HepG2 (cell line): ENCODE measurements at regions of chr16 and their contacts with region 1.

Region 1: GRCh38 chr16:18801197-18801972 is at the start of gene ARL6IP1:
- DNase-seq: peak; percentile 100
- ATAC-seq: peak; percentile 95
- H3K4me3 ChIP-seq: peak within 1 kb of the TSS; percentile 88 to 100 (median 95)
- H3K27ac ChIP-seq: peak within 1 kb of the TSS; percentile 86
- H3K4me1 ChIP-seq: peaks cover 65% of the 10 kb centered on the region
- H3K27me3 ChIP-seq: no peaks in the 10 kb centered on the region; a peak in 1 of 5 replicates
- CTCF ChIP-seq: peak; percentile 100
- EP300 ChIP-seq: peak; percentile 53 to 77; a peak in 3 of 4 replicates
- POLR2A ChIP-seq: peak; percentile 100
- RAD21 ChIP-seq: peak; percentile 91
- total RNA-seq, gene ARL6IP1: 273 and 373 TPM in 2 replicates

Region 2: DNA sequence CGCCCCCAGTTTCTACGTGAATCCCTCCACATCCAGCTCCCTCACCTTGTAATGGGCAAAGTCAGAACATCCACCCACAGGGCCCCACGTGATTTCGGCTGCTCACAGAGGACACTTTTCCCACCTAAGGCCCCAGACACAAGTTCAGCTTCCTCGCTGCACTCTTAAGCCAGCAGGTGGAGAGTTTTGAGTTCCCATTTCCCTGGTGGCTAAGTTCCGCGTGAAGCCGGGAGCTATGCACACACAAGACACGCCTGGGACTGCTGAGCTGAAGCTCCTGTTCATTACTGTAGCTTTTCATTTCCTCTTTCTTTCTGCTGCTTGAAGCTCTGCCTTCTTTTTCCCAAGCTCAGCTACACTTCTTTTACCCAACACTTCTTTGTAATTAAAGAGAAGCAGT is 738.7 kb before region 1 on chr16:
- CTCF ChIA-PET with region 1: no interaction called
- POLR2A ChIA-PET with region 1: no interaction called
- in situ Hi-C with region 1: no loop called
- intact Hi-C with region 1: no loop called
- DNase-seq: no peak
- ATAC-seq: peak; percentile 42; the same call in 1 of the 3 replicates
- H3K4me3 ChIP-seq: no peak overlapping the region
- H3K27ac ChIP-seq: no peak overlapping the region
- H3K4me1 ChIP-seq: no peaks in the 10 kb centered on the region
- H3K27me3 ChIP-seq: peaks cover 5 to 41% of the 10 kb centered on the region in 2 experiments; a peak in 4 of 5 replicates
- CTCF ChIP-seq: no peak
- EP300 ChIP-seq: no peak
- POLR2A ChIP-seq: no peak
- RAD21 ChIP-seq: no peak

Region 3: GRCh38 chr16:18782697-18783429 is 18.5 kb before region 1 on chr16:
- CTCF ChIA-PET with region 1: no interaction called
- POLR2A ChIA-PET with region 1: interaction called, 545 read pairs
- in situ Hi-C with region 1: no loop called
- intact Hi-C with region 1: no loop called
- DNase-seq: no peak
- ATAC-seq: no peak
- H3K4me3 ChIP-seq: no peak overlapping the region
- H3K27ac ChIP-seq: no peak overlapping the region
- H3K4me1 ChIP-seq: peaks cover 42% of the 10 kb centered on the region
- H3K27me3 ChIP-seq: no peaks in the 10 kb centered on the region
- CTCF ChIP-seq: no peak
- EP300 ChIP-seq: no peak
- POLR2A ChIP-seq: peak in 1 of 2 experiments; percentile 23; a peak in 1 of 4 replicates
- RAD21 ChIP-seq: no peak

Region 4: GRCh38 chr16:18816286-18816685 is 14.9 kb after region 1 on chr16:
- CTCF ChIA-PET with region 1: no interaction called
- POLR2A ChIA-PET with region 1: interaction called, 51 read pairs
- in situ Hi-C with region 1: no loop called
- intact Hi-C with region 1: no loop called
- DNase-seq: no peak
- ATAC-seq: no peak
- H3K4me3 ChIP-seq: no peak overlapping the region
- H3K27ac ChIP-seq: no peak overlapping the region
- H3K4me1 ChIP-seq: no peaks in the 10 kb centered on the region
- H3K27me3 ChIP-seq: no peaks in the 10 kb centered on the region
- CTCF ChIP-seq: no peak
- EP300 ChIP-seq: no peak
- POLR2A ChIP-seq: no peak
- RAD21 ChIP-seq: no peak

Region 5: GRCh38 chr16:18846416-18846815 is 45.0 kb after region 1 on chr16:
- CTCF ChIA-PET with region 1: no interaction called
- POLR2A ChIA-PET with region 1: interaction called, 10 read pairs
- in situ Hi-C with region 1: no loop called
- intact Hi-C with region 1: no loop called
- DNase-seq: no peak
- ATAC-seq: no peak
- H3K4me3 ChIP-seq: no peak overlapping the region
- H3K27ac ChIP-seq: no peak overlapping the region
- H3K4me1 ChIP-seq: no peaks in the 10 kb centered on the region
- H3K27me3 ChIP-seq: no peaks in the 10 kb centered on the region
- CTCF ChIP-seq: no peak
- EP300 ChIP-seq: no peak
- POLR2A ChIP-seq: no peak
- RAD21 ChIP-seq: no peak

Region 6: GRCh38 chr16:18959031-18959505 is 157.7 kb after region 1 on chr16:
- CTCF ChIA-PET with region 1: no interaction called
- POLR2A ChIA-PET with region 1: interaction called, 27 read pairs
- in situ Hi-C with region 1: no loop called
- intact Hi-C with region 1: no loop called
- DNase-seq: peak; percentile 35
- ATAC-seq: peak; percentile 17
- H3K4me3 ChIP-seq: no peak overlapping the region
- H3K27ac ChIP-seq: no peak overlapping the region
- H3K4me1 ChIP-seq: peaks cover 53% of the 10 kb centered on the region
- H3K27me3 ChIP-seq: peaks cover 3 to 8% of the 10 kb centered on the region in 2 experiments; a peak in 2 of 5 replicates
- CTCF ChIP-seq: no peak
- EP300 ChIP-seq: no peak
- POLR2A ChIP-seq: no peak
- RAD21 ChIP-seq: no peak

Region 7: DNA sequence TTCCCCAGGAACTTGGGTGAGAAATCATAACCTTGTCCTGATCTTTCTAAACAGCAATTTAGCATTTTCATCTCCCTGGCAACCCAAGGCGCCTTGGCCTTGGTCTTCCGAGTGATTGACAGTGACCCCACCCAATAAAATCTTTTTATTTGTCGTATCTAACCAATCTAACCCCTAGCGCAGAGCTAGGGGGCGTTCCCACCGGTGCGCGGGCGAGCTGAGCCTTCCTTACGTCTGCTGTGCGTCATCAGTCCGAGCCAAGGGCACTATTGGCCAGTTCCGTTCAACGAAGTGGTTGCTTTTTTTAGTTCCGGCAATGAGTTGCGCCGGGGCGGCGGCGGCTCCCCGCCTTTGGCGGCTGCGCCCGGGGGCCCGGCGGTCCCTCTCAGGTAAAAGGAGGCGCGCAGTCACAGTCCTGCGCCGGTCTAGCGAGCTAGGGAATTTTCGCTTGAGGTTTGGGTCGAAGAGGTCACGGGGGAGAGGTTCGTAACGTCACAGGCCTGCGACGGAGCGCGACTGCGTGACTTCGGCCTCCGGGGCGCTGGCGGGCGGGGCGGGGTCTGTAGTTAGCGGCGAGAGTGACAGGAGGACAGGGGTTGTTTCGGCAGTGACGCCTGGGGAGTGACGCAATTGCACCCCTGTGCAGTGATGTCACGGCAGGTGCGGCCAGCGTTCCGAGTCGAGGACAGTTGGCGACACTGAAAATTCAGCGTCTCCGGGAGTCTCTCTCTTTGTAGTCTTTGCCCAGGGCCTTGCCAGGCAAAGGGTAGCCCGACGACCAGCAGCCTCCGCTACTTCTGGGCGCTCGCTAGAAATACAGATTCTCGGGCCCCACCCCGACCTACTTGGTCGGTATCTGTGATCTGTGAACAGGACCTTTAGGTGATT is 266.2 kb after region 1 on chr16 and contains the start of gene COQ7:
- CTCF ChIA-PET with region 1: no interaction called
- POLR2A ChIA-PET with region 1: interaction called, 12 read pairs
- in situ Hi-C with region 1: no loop called
- intact Hi-C with region 1: loop called (anchors 2 kb)
- DNase-seq: peak; percentile 100
- ATAC-seq: peak; percentile 93
- H3K4me3 ChIP-seq: peak within 1 kb of the TSS; percentile 66 to 87 (median 86)
- H3K27ac ChIP-seq: peak within 1 kb of the TSS; percentile 96
- H3K4me1 ChIP-seq: peaks cover 24% of the 10 kb centered on the region
- H3K27me3 ChIP-seq: no peaks in the 10 kb centered on the region; a peak in 1 of 5 replicates
- CTCF ChIP-seq: peak; percentile 19; the same call in 1 of the 2 replicates
- EP300 ChIP-seq: peak in 1 of 2 experiments; percentile 82; a peak in 1 of 4 replicates
- POLR2A ChIP-seq: peak; percentile 77 to 89
- RAD21 ChIP-seq: peak; percentile 71
- total RNA-seq, gene COQ7: 45.7 and 50.6 TPM in 2 replicates

Region 8: GRCh38 chr16:19513377-19514053 is 712.1 kb after region 1 on chr16:
- CTCF ChIA-PET with region 1: no interaction called
- POLR2A ChIA-PET with region 1: no interaction called
- in situ Hi-C with region 1: no loop called
- intact Hi-C with region 1: no loop called
- DNase-seq: no peak
- ATAC-seq: no peak
- H3K4me3 ChIP-seq: no peak overlapping the region
- H3K27ac ChIP-seq: no peak overlapping the region
- H3K4me1 ChIP-seq: peaks cover 28% of the 10 kb centered on the region
- H3K27me3 ChIP-seq: no peaks in the 10 kb centered on the region
- CTCF ChIP-seq: peak; percentile 27; the same call in 1 of the 2 replicates
- EP300 ChIP-seq: no peak
- POLR2A ChIP-seq: no peak
- RAD21 ChIP-seq: no peak